AG04449 (cell line): ENCODE measurements at regions of chr15 and their contacts with region 1.

Region 1: GRCh38 chr15:64731012-64731806 is 44.2 kb downstream of the RBPMS2 start:
- DNase-seq: no peak
- H3K4me3 ChIP-seq: no peak overlapping the region
- CTCF ChIP-seq: peak; percentile 82

Region 2: DNA sequence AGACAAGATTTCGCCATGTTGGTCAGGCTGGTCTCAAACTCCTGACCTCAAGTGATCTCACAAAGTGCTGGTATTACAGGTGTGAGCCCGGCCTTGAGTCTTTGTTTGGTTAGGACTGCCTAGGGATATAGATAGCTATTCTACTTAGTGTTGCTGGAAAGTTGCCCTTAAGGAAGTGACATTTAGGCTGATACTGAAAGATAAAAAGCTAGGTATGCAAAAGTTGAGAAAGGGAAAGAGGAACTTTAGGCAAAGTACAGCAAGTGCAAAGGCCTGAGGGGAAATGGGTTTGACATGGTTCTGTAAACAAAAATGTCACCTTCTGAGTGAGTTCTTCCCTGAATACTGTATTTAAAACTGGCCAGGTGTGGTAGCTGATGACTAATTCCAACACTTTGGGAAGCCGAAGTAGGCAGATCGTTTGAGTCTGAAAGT is 159.3 kb before region 1 on chr15:
- CTCF ChIA-PET with region 1: no interaction called
- POLR2A ChIA-PET with region 1: no interaction called
- DNase-seq: no peak
- H3K4me3 ChIP-seq: no peak overlapping the region
- CTCF ChIP-seq: no peak

Region 3: GRCh38 chr15:64681424-64682024 is 49.7 kb before region 1 on chr15:
- CTCF ChIA-PET with region 1: interaction called, 690 read pairs
- POLR2A ChIA-PET with region 1: interaction called, 5 read pairs
- DNase-seq: no peak
- H3K4me3 ChIP-seq: no peak overlapping the region
- CTCF ChIP-seq: peak; percentile 42

Region 4: GRCh38 chr15:64717735-64718495 is 13.3 kb before region 1 on chr15:
- CTCF ChIA-PET with region 1: interaction called, 99 read pairs
- POLR2A ChIA-PET with region 1: no interaction called
- DNase-seq: no peak
- H3K4me3 ChIP-seq: no peak overlapping the region
- CTCF ChIP-seq: no peak

Region 5: DNA sequence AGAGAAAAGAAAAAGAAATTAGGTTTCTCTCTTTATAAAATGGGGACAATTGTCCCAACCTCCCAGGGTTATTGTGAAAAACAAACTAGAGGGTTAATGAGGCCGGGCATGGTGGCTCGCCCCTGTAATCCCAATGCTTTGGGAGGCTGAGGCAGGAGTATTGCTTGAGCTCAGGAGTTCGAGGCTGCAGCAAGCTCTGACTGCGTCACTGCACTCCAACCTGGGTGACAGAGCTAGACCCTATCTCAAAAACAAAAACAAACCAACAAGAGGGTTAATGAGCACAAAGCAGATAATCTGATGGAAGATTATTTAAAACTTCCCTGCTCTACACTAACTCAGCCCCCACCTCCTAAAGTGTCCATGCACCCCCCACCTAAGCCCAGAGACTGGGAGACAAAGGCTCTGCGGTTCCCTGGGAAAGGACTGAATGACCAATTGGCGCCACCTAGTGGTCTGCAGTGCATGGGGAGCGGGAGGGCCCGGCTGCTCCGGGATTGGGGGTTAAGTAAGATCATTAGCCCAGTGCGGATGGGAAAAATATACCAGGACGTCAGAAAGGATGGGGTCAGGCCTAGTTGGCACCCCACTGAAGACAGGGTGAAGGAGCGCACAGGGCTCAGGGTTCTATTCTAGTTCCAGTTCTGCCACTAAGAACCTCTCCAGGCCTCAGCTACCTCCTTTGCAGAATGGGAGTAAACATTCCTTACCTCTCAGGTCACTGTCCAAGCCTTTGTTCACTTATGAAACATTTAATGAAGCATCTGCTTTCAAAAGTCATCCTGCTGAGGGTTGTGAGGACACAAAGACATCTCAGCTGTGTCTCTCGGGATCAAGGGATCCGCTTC is 78.7 kb after region 1 on chr15:
- CTCF ChIA-PET with region 1: interaction called, 231 read pairs
- POLR2A ChIA-PET with region 1: no interaction called
- DNase-seq: no peak
- H3K4me3 ChIP-seq: no peak overlapping the region
- CTCF ChIP-seq: peak; percentile 95

Region 6: DNA sequence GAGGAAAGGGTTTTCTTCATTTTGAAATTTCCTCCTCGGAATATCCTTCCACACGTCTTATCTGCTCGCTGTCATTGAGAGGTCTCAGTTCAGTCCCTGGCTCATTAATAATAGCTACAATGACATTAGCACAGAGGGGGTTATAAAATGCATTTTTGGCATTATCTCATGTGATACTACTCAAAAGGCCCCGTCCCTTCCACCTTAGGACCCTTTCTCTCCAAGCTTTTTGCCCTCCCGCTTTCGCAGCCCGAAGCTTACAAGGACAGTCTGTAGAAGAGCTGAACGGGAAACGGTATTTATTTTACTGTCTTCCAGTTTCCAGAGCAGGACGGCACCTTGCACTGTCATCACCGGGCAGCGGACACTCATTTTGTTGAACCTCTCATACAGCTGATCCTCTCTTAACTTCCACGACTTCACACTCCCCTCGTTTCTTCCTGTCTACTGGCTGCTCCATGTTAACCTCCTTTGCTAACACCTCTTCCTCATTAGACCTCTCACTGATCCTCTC is 104.9 kb after region 1 on chr15:
- CTCF ChIA-PET with region 1: interaction called, 20 read pairs
- POLR2A ChIA-PET with region 1: no interaction called
- DNase-seq: no peak
- H3K4me3 ChIP-seq: no peak overlapping the region
- CTCF ChIP-seq: no peak

Region 7: DNA sequence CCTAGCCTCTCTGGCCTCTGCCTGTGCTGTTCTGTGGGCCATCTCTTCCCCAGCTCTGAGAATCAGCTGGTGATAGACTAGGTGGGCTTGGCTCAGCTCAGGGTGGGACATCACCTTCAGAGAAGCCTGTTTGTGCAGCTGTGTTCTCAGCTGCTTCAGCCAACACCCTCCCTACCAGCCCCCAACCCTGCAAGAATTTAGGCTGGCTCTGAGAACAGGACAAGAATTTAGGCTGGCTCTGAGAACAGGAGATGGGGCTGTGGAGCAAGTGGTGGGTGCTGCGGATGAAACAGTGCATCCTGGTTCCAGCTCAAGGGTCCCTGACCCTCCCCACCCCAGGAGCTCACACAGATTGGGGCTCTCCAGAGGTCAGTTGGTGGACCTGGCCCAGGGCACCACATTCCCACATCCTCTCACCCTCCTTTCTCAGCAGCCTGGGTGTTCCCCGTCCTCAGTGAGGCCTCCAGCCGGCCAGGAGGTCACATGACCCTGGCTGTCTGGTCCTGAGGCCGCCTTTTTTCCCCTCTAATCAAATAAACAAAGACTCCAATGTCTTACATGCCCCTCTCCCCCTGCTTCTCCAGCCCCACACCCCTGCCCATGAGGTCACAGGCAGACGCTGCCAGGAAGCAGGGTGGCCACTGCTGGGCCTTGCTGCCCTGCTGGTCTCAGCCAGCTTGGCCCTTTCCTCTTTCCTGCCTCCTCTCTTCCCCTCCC is 125.4 kb after region 1 on chr15:
- CTCF ChIA-PET with region 1: no interaction called
- POLR2A ChIA-PET with region 1: no interaction called
- DNase-seq: no peak
- H3K4me3 ChIP-seq: no peak overlapping the region
- CTCF ChIP-seq: no peak

Region 8: GRCh38 chr15:65077981-65078352 is 346.8 kb after region 1 on chr15:
- CTCF ChIA-PET with region 1: interaction called, 23 read pairs
- POLR2A ChIA-PET with region 1: no interaction called
- DNase-seq: no peak
- H3K4me3 ChIP-seq: no peak overlapping the region
- CTCF ChIP-seq: peak; percentile 85